Naive thymus-derived CD4-positive, alpha-beta T cell (primary cell): ENCODE measurements at regions of chr7 and their contacts with region 1.

Region 1: GRCh38 chr7:146084086-146084485 is 32.5 kb upstream of the CNTNAP2 start:
- DNase-seq: no peak
- ATAC-seq: no peak
- H3K4me3 ChIP-seq: no peak overlapping the region
- H3K4me3 Mint-ChIP-seq: no peak overlapping the region
- H3K27ac ChIP-seq: no peak overlapping the region
- H3K27ac Mint-ChIP-seq: no peak overlapping the region
- H3K4me1 ChIP-seq: no peaks in the 10 kb centered on the region
- H3K4me1 Mint-ChIP-seq: no peaks in the 10 kb centered on the region
- H3K27me3 ChIP-seq: no peaks in the 10 kb centered on the region
- H3K27me3 Mint-ChIP-seq: no peaks in the 10 kb centered on the region

Region 2: GRCh38 chr7:144452064-144452463 is 1632.0 kb before region 1 on chr7:
- CTCF ChIA-PET with region 1: no interaction called
- POLR2A ChIA-PET with region 1: no interaction called
- intact Hi-C with region 1: no loop called
- DNase-seq: no peak
- ATAC-seq: no peak
- H3K4me3 ChIP-seq: no peak overlapping the region
- H3K4me3 Mint-ChIP-seq: no peak overlapping the region
- H3K27ac ChIP-seq: no peak overlapping the region
- H3K27ac Mint-ChIP-seq: no peak overlapping the region
- H3K4me1 ChIP-seq: no peaks in the 10 kb centered on the region
- H3K4me1 Mint-ChIP-seq: no peaks in the 10 kb centered on the region
- H3K27me3 ChIP-seq: no peaks in the 10 kb centered on the region
- H3K27me3 Mint-ChIP-seq: no peaks in the 10 kb centered on the region

Region 3: GRCh38 chr7:144513334-144513733 is 1570.8 kb before region 1 on chr7:
- CTCF ChIA-PET with region 1: no interaction called
- POLR2A ChIA-PET with region 1: no interaction called
- intact Hi-C with region 1: loop called in 1 of 2 experiments (anchors 10 kb)
- DNase-seq: peak in 1 of 9 donors; percentile 7
- ATAC-seq: no peak
- H3K4me3 ChIP-seq: no peak overlapping the region
- H3K4me3 Mint-ChIP-seq: no peak overlapping the region
- H3K27ac ChIP-seq: no peak overlapping the region
- H3K27ac Mint-ChIP-seq: no peak overlapping the region
- H3K4me1 ChIP-seq: no peaks in the 10 kb centered on the region
- H3K4me1 Mint-ChIP-seq: peaks cover 1 to 18% (median 8%) of the 10 kb centered on the region in 7 donors
- H3K27me3 ChIP-seq: no peaks in the 10 kb centered on the region
- H3K27me3 Mint-ChIP-seq: no peaks in the 10 kb centered on the region